Prostate gland (tissue), 2 donors: ENCODE measurements at regions of chr20 and their contacts with region 1.

Region 1: DNA sequence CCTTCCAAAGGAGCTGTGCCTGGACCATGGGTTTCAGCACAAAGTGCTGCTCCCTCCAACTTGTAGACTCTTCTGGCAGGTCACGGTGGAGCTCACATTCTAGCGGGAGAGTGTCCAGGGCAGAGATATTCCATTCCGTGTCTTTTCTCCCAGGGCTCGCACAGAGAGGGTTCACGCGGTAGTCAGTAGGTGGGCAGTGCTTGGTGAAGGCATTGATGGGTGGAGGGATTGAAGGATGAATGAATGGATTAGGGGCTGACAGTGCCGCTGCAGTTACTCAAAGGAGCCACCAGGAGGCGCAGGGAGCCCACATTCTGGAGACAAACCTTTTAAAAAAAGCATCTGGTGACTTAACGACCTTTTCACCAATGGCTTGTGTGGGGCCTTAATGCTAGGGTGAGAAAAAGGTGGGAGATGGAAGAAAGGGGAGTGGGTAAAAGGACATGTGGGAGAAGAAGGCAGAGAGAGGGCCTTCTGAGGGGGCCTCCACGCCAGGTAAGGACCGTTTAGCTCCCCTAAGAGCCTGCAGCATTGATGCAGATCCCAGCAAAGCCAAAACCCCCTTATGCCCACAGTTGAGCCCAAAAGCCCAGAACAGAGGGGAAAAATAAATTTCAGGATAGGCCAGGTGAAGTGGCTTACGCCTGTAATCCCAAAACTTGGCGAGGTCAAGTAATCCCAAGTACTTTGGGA is 17.5 kb upstream of the FAM110A start:
- DNase-seq: peak; percentile 48
- H3K4me3 ChIP-seq: no peak overlapping the region
- H3K27ac ChIP-seq: no peak overlapping the region
- H3K4me1 ChIP-seq: no peaks in the 10 kb centered on the region
- H3K27me3 ChIP-seq: no peaks in the 10 kb centered on the region
- CTCF ChIP-seq: peak; percentile 92 to 97 (median 94)
- POLR2A ChIP-seq: no peak

Region 2: DNA sequence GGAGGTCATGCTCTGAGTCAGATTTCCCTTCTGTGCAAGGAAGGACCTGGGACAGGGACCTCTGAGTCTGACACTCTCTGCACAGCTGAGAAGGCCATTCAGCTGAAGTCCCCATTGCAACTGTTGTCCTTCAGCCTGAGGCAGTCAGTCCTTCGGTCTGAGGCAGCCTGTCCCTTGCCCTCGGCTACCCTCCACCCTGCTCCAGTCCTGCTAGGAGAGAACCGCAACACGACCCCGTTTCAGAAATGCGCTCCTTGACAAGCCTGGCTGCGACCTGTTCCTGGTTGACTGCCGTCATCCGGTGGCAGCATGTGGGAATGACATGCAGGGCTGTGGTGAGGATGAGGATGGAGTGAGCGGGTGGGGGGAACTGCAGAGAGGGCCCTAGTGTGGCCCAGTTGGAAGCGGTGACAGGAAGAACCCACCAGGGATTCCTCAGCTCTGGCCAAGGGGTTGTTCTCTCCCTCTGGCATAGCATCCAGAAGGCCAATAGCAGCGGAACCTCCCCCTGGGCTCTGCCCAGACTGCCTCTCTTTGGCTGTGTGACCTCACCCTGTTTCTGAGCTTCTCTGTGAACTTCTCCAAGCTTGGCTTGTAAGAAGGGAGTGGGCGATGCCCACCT is 140.4 kb after region 1 on chr20:
- intact Hi-C with region 1: loop called (anchors 1 kb)
- DNase-seq: peak; percentile 56
- H3K4me3 ChIP-seq: no peak overlapping the region
- H3K27ac ChIP-seq: no peak overlapping the region
- H3K4me1 ChIP-seq: no peaks in the 10 kb centered on the region
- H3K27me3 ChIP-seq: peaks cover 3% of the 10 kb centered on the region
- CTCF ChIP-seq: peak; percentile 90 to 96 (median 96)
- POLR2A ChIP-seq: no peak

Region 3: GRCh38 chr20:1108437-1108920 is 292.4 kb after region 1 on chr20:
- intact Hi-C with region 1: loop called (anchors 10 kb)
- DNase-seq: no peak
- H3K4me3 ChIP-seq: no peak overlapping the region
- H3K27ac ChIP-seq: no peak overlapping the region
- H3K4me1 ChIP-seq: no peaks in the 10 kb centered on the region
- H3K27me3 ChIP-seq: no peaks in the 10 kb centered on the region
- CTCF ChIP-seq: peak in 3 of 4 experiments; percentile 35 to 55 (median 47)
- POLR2A ChIP-seq: no peak

Region 4: GRCh38 chr20:1212607-1213396 is 396.7 kb after region 1 on chr20:
- intact Hi-C with region 1: loop called (anchors 10 kb)
- DNase-seq: peak; percentile 67
- H3K4me3 ChIP-seq: no peak overlapping the region
- H3K27ac ChIP-seq: no peak overlapping the region
- H3K4me1 ChIP-seq: no peaks in the 10 kb centered on the region
- H3K27me3 ChIP-seq: no peaks in the 10 kb centered on the region
- CTCF ChIP-seq: peak; percentile 23 to 72 (median 56)
- POLR2A ChIP-seq: no peak